GM12878 (cell line): ENCODE measurements at regions of chr2 and their contacts with region 1.

Region 1: DNA sequence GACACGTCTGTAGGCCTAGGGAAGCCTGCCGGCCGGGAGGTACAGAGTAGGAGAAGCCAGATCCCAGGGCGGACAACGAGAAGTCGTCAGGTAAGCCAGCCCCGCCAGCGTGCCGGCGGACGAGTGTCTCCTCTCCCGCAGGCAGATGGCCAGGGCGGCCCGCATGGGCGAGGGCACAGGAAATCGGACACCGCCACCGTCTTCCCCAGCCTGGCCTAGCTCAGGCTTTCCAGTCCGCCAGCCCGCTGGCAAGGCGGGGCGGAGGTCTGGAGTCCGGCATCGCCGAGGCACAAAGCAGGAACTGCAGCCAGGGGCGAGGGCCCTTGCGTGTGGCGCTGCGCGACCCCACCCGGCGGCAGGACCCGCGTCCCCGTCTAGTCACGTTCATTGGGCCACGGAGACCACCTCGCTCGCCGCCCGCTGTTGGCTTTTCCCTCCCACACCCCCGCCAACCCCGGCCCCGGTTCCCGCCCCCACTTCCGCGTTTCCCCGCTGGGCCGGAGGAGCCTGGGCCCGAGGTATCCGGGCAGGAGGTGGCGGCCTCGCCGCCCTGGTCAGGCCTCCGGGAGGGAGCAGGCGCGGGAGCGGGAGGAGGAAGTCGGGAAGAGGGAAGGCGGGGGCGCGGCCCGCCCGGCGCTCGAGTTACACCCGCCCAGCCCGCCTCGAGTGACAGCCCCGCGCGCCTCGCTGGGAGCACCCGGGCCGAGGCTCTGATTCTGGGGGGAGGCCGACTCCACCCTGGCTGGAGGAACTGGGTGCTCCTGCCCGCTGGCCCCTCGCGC is at the start of gene GPD2:
- DNase-seq: no peak
- ATAC-seq: peak; percentile 77
- H3K4me3 ChIP-seq: peak within 1 kb of the TSS; percentile 68
- H3K27ac ChIP-seq: peak within 1 kb of the TSS; percentile 81
- H3K4me1 ChIP-seq: peaks cover 23% of the 10 kb centered on the region
- H3K27me3 ChIP-seq: no peaks in the 10 kb centered on the region
- CTCF ChIP-seq: no peak
- EP300 ChIP-seq: 0 out of 4 replicates have a peak, but pooled peaks of 1 of the 2 experiments have one; percentile 4
- POLR2A ChIP-seq: peak; percentile 90
- RAD21 ChIP-seq: 0 out of 2 replicates have a peak, but pooled peaks have one; percentile 10
- polyA plus RNA-seq, gene GPD2: 10.0 to 10.5 TPM

Region 2: GRCh38 chr2:156346731-156347130 is 89.2 kb before region 1 on chr2:
- CTCF ChIA-PET with region 1: interaction called, 16 read pairs
- POLR2A ChIA-PET with region 1: interaction called, 20 read pairs
- RAD21 ChIA-PET with region 1: interaction called, 30 read pairs
- SMC1A ChIA-PET with region 1: interaction called, 11 read pairs
- in situ Hi-C with region 1: no loop called
- intact Hi-C with region 1: no loop called
- DNase-seq: no peak
- ATAC-seq: no peak
- H3K4me3 ChIP-seq: no peak overlapping the region
- H3K27ac ChIP-seq: no peak overlapping the region
- H3K4me1 ChIP-seq: no peaks in the 10 kb centered on the region
- H3K27me3 ChIP-seq: no peaks in the 10 kb centered on the region
- CTCF ChIP-seq: no peak
- EP300 ChIP-seq: no peak
- POLR2A ChIP-seq: no peak
- RAD21 ChIP-seq: no peak

Region 3: DNA sequence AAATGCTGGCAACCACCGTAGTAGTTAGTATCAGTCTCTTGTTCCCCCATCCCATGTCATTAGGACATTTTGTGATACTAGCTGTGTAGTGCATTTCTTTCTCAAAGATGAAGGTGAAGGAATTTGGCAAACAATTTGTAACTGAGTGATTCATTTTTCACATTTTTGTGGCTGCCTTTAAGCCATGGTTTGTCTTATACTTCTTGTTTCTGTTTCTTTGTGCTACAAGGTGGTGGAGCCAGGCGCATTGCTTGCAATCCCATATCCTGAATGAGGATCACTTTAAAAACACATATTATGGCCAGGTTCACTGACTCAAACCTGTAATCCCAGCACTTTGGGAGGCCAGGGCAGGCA is 40.9 kb after region 1 on chr2:
- CTCF ChIA-PET with region 1: interaction called, 6 read pairs
- POLR2A ChIA-PET with region 1: interaction called, 7 read pairs
- RAD21 ChIA-PET with region 1: interaction called, 20 read pairs
- SMC1A ChIA-PET with region 1: interaction called, 35 read pairs
- in situ Hi-C with region 1: no loop called
- intact Hi-C with region 1: no loop called
- DNase-seq: peak; percentile 77
- ATAC-seq: peak; percentile 86
- H3K4me3 ChIP-seq: no peak overlapping the region
- H3K27ac ChIP-seq: peak overlapping the region; percentile 66
- H3K4me1 ChIP-seq: peaks cover 39% of the 10 kb centered on the region; the same call in 1 of the 2 replicates
- H3K27me3 ChIP-seq: no peaks in the 10 kb centered on the region
- CTCF ChIP-seq: no peak
- EP300 ChIP-seq: peak; percentile 24 to 52; a peak in 1 of 4 replicates
- POLR2A ChIP-seq: no peak
- RAD21 ChIP-seq: no peak

Region 4: DNA sequence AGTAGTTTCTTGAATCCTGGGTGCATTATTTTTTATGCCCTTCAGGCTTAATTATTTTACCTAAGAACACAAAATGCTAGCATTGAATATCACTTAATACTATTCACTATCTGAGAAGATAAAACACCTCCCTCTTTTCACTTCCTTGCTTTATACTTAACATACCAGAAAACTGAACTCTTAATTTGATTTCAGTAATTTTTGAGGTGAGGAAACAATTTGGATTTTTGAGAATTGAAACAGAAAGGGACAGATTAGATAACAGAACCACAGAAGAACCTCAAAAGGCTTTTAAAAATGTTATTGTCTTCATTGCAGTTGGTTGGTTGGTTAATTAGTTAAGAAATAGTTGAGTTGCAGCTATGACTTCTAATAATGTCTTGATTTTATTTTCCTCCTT is 69.8 kb after region 1 on chr2:
- CTCF ChIA-PET with region 1: no interaction called
- POLR2A ChIA-PET with region 1: no interaction called
- RAD21 ChIA-PET with region 1: interaction called, 6 read pairs
- SMC1A ChIA-PET with region 1: interaction called, 12 read pairs
- in situ Hi-C with region 1: no loop called
- intact Hi-C with region 1: no loop called
- DNase-seq: no peak
- ATAC-seq: peak; percentile 85
- H3K4me3 ChIP-seq: no peak overlapping the region
- H3K27ac ChIP-seq: no peak overlapping the region
- H3K4me1 ChIP-seq: peaks cover 12% of the 10 kb centered on the region
- H3K27me3 ChIP-seq: no peaks in the 10 kb centered on the region
- CTCF ChIP-seq: no peak
- EP300 ChIP-seq: no peak
- POLR2A ChIP-seq: no peak
- RAD21 ChIP-seq: no peak

Region 5: GRCh38 chr2:156538083-156538504 is 102.2 kb after region 1 on chr2:
- CTCF ChIA-PET with region 1: no interaction called
- POLR2A ChIA-PET with region 1: interaction called, 6 read pairs
- RAD21 ChIA-PET with region 1: interaction called, 5 read pairs
- SMC1A ChIA-PET with region 1: interaction called, 18 read pairs
- in situ Hi-C with region 1: no loop called
- intact Hi-C with region 1: loop called (anchors 5 kb)
- DNase-seq: peak; percentile 53
- ATAC-seq: peak; percentile 87
- H3K4me3 ChIP-seq: no peak overlapping the region
- H3K27ac ChIP-seq: peak overlapping the region; percentile 69
- H3K4me1 ChIP-seq: peaks cover 49% of the 10 kb centered on the region
- H3K27me3 ChIP-seq: no peaks in the 10 kb centered on the region
- CTCF ChIP-seq: no peak
- EP300 ChIP-seq: no peak
- POLR2A ChIP-seq: peak; percentile 49; the same call in 1 of the 2 replicates
- RAD21 ChIP-seq: no peak

Region 6: DNA sequence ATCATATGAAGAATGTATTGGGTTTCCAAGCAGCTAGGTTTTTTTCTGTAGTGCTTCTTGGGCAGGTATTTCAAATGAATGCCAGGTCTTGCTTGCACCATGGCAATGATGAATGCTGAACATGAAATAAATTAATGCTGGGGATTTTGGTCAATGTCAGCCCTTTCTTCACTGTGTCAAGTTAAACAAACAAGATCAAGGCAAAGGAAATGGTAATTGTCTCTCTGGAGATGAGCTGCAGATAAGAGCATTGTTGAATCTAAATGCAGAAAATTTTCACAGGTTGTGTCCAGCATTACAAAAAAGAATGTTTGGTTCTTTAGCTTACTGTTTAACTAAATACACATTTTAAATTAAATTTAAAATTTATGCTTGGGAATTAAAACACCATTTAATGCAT is 144.6 kb after region 1 on chr2:
- CTCF ChIA-PET with region 1: interaction called, 6 read pairs
- POLR2A ChIA-PET with region 1: no interaction called
- RAD21 ChIA-PET with region 1: interaction called, 7 read pairs
- SMC1A ChIA-PET with region 1: interaction called, 28 read pairs
- in situ Hi-C with region 1: no loop called
- intact Hi-C with region 1: no loop called
- DNase-seq: no peak
- ATAC-seq: no peak
- H3K4me3 ChIP-seq: no peak overlapping the region
- H3K27ac ChIP-seq: no peak overlapping the region
- H3K4me1 ChIP-seq: no peaks in the 10 kb centered on the region; the same call in 1 of the 2 replicates
- H3K27me3 ChIP-seq: no peaks in the 10 kb centered on the region
- CTCF ChIP-seq: no peak
- EP300 ChIP-seq: no peak
- POLR2A ChIP-seq: no peak
- RAD21 ChIP-seq: no peak